ENCODE measurements at regions of chr2 and their contacts with region 1.

Region 1: DNA sequence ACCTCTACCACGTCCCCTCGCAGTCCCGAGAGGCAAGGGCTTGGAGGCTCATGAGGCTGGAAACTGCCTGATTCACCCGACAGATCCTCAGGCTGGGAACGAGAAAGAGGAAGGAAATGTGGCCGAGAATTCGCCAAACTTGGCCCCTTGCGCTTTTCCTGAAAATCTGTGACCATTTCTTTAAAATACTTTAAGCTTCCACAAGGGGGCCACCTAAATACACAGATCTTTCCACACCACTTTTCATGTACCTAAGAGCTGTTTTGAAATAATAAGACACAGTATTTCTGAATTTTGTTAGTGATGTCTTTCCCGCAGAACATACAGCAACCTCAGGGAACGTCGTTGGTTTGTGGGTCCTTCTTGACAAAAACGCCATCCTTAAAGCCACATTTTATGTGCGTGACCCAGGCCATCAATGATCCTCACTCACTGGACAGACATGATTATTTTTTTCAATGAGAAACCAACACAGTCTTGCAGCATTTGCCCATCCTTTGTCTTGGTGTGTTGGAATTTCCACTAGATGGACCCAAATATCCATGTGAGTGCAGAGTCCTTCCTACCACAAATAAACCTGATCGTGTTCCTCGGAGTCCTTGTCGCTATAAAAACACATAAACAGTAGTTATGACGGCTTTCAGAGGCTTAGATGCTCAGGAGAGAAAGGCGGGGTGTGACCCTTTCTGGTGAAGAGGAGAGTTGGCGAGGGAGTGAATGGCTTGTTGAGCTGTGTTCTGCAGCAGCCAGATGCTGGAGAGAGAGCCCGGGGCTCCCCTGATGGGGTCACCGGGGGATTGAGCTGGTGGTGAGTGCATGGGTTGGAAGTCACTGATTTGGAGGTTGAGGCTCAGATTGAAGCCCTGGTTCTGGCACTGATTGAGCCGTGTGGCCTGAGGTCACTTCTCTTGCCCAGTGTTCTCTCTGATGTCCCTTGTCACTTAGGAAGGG is 25.0 kb downstream of the DCDC2C start:
- DNase-seq: peak; percentile 33
- ATAC-seq: peak; percentile 73
- H3K4me3 ChIP-seq: no peak overlapping the region
- H3K27ac ChIP-seq: no peak overlapping the region
- H3K4me1 ChIP-seq: no peaks in the 10 kb centered on the region; a peak in 1 of 4 replicates
- H3K27me3 ChIP-seq: peaks cover 13% of the 10 kb centered on the region
- CTCF ChIP-seq: peak; percentile 48 to 67 (median 64); a peak in 4 of 6 replicates
- POLR2A ChIP-seq: no peak
- RAD21 ChIP-seq: peak; percentile 75

Region 2: GRCh38 chr2:3041841-3042608 is 686.4 kb before region 1 on chr2:
- CTCF ChIA-PET with region 1: no interaction called
- POLR2A ChIA-PET with region 1: no interaction called
- RAD21 ChIA-PET with region 1: no interaction called
- intact Hi-C with region 1: no loop called
- DNase-seq: no peak
- ATAC-seq: no peak
- H3K4me3 ChIP-seq: no peak overlapping the region
- H3K27ac ChIP-seq: no peak overlapping the region
- H3K4me1 ChIP-seq: no peaks in the 10 kb centered on the region
- H3K27me3 ChIP-seq: no peaks in the 10 kb centered on the region
- CTCF ChIP-seq: no peak
- POLR2A ChIP-seq: no peak
- RAD21 ChIP-seq: no peak

Region 3: GRCh38 chr2:3780477-3781402 is 52.4 kb after region 1 on chr2:
- CTCF ChIA-PET with region 1: interaction called, 34 read pairs
- POLR2A ChIA-PET with region 1: no interaction called
- RAD21 ChIA-PET with region 1: no interaction called
- intact Hi-C with region 1: loop called (anchors 2 kb)
- DNase-seq: peak; percentile 46
- ATAC-seq: peak; percentile 97
- H3K4me3 ChIP-seq: no peak overlapping the region
- H3K27ac ChIP-seq: no peak overlapping the region
- H3K4me1 ChIP-seq: peaks cover 0 to 7% of the 10 kb centered on the region in 2 experiments; a peak in 1 of 4 replicates
- H3K27me3 ChIP-seq: peaks cover 13% of the 10 kb centered on the region; the same call in 1 of the 2 replicates
- CTCF ChIP-seq: peak; percentile 69 to 91 (median 88); a peak in 5 of 6 replicates
- POLR2A ChIP-seq: no peak
- RAD21 ChIP-seq: peak; percentile 64

Region 4: DNA sequence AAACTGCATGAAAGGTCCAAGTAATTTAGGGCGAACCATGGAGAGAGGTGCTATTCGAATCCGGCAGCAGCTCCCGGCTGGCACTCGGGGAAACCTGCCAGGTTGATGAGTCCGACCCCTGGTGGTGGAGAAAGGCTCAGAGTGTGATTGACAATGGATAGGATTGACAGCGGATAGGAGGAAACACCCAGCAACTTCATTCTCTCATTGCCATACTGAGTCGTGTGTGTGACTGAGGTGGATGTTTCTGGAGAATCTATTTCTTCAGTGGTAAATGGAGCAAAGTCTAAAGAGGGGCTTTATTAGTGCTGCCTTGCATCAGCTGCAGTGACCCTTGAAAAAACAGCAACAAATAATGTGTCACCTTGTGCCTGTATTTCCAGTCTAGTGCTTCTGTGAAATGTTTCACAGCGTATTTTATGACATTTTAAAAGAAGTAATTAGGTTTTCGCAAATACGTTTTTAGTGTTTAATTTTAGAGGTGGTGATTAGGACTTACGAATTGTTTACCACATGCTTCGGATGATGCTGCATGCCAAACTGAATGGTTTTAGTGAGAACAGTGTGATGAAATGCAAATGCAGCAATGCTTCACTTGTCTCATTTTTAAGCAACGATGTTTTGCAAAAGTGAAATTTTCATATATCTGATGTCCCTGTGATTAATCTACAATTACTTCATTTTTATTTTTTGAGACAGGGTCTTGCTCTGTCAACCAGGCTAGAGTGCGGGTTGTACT is 77.0 kb after region 1 on chr2:
- CTCF ChIA-PET with region 1: interaction called, 24 read pairs
- POLR2A ChIA-PET with region 1: no interaction called
- RAD21 ChIA-PET with region 1: no interaction called
- intact Hi-C with region 1: no loop called
- DNase-seq: peak; percentile 23
- ATAC-seq: peak; percentile 96
- H3K4me3 ChIP-seq: no peak overlapping the region
- H3K27ac ChIP-seq: no peak overlapping the region
- H3K4me1 ChIP-seq: no peaks in the 10 kb centered on the region
- H3K27me3 ChIP-seq: peaks cover 10% of the 10 kb centered on the region; the same call in 1 of the 2 replicates
- CTCF ChIP-seq: peak; percentile 66 to 84 (median 71); a peak in 5 of 6 replicates
- POLR2A ChIP-seq: no peak
- RAD21 ChIP-seq: peak; percentile 55

Region 5: DNA sequence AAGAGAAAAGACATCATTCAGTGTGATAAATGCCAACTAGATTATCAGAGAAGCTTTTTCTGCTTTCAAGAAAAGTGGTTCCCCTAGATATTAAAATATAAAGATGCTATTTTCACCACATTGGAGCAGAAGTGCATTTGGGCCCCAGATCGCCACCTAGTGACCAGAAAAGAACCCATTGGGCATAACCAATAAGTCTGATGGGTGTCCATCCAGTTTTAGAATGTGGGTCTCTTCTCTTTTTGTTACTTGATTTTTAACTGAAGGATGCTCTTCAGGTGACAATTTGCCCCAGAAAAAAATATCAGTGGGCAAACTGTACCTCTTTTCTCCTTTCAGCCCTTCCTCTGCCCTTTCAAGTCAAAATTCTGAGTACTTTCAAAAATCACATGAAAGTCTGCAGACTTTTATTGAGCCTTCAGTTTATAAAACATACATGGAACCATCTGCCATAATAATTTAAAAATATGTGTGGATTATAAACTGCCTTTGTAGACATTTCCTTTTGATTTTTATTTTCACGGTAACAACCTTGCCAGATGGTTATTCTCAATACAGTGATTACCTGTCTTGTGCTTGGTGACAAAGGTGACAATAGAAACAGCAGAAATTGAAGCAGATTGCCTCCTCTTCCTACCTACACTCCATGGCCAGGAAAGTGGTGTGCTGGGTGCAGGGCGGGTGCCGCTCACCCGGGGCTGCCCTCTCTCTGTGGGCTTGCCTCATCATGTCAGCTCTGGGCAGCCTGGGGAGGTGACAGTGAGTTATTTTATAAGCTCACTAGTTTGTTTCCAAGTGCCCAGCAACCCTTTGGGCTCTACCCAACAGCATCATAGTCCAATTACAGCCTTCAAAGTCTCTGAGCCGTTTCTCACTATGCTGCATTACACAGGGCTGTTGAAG is 99.5 kb after region 1 on chr2:
- CTCF ChIA-PET with region 1: interaction called, 12 read pairs
- POLR2A ChIA-PET with region 1: no interaction called
- RAD21 ChIA-PET with region 1: no interaction called
- intact Hi-C with region 1: loop called (anchors 2 kb)
- DNase-seq: no peak
- ATAC-seq: peak; percentile 88
- H3K4me3 ChIP-seq: no peak overlapping the region
- H3K27ac ChIP-seq: no peak overlapping the region
- H3K4me1 ChIP-seq: no peaks in the 10 kb centered on the region
- H3K27me3 ChIP-seq: peaks cover 25% of the 10 kb centered on the region
- CTCF ChIP-seq: peak; percentile 47 to 80 (median 78); a peak in 5 of 6 replicates
- POLR2A ChIP-seq: no peak
- RAD21 ChIP-seq: peak; percentile 42

Region 6: DNA sequence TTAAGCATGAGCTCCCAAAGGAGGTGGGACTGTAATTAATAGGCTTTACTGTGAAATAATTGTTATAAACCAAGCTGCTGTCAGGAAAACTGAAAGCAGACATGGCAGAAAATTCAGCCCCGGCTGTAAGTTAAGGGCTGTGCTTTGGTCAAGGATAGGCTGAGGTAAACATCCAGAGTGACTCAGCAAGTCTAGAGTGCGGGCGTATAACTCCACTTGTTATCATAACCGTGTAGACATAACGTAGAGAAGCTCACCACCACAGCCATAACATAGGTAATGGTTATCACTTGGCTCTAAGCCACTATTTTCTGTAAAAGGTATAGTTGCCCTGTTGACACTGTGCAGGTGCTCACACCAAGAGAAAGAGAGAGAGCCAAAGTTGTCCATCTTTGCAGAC is 291.8 kb after region 1 on chr2:
- CTCF ChIA-PET with region 1: no interaction called
- POLR2A ChIA-PET with region 1: no interaction called
- RAD21 ChIA-PET with region 1: no interaction called
- intact Hi-C with region 1: no loop called
- DNase-seq: no peak
- ATAC-seq: no peak
- H3K4me3 ChIP-seq: no peak overlapping the region
- H3K27ac ChIP-seq: no peak overlapping the region
- H3K4me1 ChIP-seq: no peaks in the 10 kb centered on the region
- H3K27me3 ChIP-seq: no peaks in the 10 kb centered on the region
- CTCF ChIP-seq: no peak
- POLR2A ChIP-seq: no peak
- RAD21 ChIP-seq: no peak